A549 (cell line): ENCODE measurements at regions of chr16 and their contacts with region 1.

Region 1: DNA sequence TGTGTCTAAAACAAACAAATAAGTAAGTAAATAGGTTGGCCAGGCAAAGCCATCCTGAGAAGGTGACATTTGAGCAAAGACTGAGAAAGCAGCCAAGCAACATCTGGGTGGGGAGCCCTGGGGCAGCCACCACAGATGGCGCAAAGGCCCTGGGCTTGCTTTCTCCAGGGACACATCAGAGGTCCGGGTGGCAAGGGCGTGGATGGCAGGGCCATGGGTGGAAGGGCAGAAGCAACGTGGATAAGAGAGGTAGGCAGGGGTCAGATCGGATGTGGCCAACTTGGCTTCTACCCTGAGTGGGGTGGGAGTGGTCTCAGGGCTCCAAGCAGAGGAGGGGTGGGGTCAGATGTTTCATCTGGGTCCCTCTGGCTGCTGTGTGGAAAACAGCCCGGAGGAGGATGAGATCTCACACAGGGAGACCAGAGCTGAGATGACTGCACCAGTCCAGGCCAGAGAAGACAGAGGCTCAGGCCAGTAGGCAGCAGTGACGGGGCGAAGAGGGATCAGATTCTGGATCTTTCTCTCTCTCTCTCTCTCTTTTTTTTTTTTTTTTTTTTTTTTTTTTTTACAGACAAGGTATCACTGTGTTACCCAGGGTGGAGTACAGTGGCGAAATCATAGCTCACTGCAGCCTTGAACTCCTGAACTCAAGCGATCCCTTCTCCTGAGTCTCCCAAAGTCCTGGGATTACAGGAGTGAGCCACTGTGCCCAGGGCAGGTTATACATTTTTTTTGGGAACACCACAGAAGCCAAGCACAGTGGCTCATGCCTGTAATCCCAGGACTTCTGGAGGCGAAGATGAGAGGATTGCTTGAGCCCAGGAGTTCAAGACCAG is 6.1 kb upstream of the SPN start:
- DNase-seq: no peak
- ATAC-seq: peak; percentile 30 to 47; a peak in 3 of 6 replicates
- H3K4me3 ChIP-seq: no peak overlapping the region
- H3K27ac ChIP-seq: no peak overlapping the region
- H3K4me1 ChIP-seq: no peaks in the 10 kb centered on the region
- CTCF ChIP-seq: no peak
- EP300 ChIP-seq: no peak
- POLR2A ChIP-seq: no peak
- RAD21 ChIP-seq: no peak

Region 2: DNA sequence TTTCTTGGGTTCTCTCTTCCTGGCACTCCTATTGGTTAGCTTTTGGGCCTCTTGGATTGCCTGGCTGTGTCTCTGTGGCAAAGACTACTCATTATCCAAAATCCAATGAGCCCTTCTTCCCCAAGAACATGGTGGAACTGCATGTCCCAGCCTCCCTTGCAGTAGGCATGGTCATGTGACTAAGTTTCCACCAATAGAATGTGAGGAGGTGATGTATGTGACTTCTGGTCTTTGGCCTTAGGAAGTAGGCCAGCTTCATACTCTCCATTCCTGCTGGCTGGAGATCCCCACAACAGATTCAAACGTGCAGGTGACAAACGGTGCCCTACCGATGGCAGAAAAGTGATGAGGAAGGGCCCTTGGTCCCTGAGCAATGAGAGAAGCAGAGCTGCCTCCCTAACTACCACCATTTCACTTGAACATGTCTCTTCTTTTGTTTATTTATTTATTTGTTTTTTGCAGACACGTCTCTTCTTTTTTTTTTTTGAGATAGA is 11.2 kb before region 1 on chr16:
- CTCF ChIA-PET with region 1: interaction called, 5 read pairs
- POLR2A ChIA-PET with region 1: interaction called, 10 read pairs
- DNase-seq: peak in 1 of 2 experiments; percentile 76
- ATAC-seq: peak; percentile 34 to 64; a peak in 3 of 6 replicates
- H3K4me3 ChIP-seq: no peak overlapping the region
- H3K27ac ChIP-seq: no peak overlapping the region
- H3K4me1 ChIP-seq: 0 out of 3 replicates have a peak, but pooled peaks cover 3% of the 10 kb centered on the region
- CTCF ChIP-seq: no peak
- EP300 ChIP-seq: no peak
- POLR2A ChIP-seq: no peak
- RAD21 ChIP-seq: no peak

Region 3: DNA sequence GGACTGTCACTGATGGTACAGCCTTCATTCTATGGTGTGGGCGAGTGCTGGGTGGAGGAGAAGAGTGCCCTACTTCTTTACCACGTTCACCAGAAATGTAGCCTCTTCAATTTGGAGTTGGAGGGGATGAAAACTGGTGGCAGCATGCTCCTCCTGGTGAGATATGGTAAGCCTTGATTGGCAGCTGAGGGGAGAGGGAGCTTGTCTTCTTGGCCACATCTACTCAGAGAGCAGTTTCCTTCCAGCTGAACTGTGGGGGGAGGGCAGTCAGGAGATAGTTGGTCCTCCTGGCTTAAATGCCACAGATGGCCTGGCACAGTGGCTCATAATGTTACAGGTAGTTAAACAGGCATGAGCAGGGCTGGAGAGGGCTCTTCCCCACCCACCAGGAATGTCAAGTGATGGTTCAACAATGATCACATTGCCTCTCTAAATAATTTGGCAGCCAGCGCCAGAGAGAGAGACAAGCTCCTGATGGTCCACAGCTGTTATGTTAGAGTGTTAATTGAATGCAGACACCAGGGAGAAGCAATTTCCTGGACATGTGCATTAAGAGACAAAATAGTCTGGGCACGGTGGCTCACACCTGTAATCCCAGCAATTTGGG is 475.1 kb after region 1 on chr16:
- CTCF ChIA-PET with region 1: no interaction called
- POLR2A ChIA-PET with region 1: no interaction called
- DNase-seq: no peak
- ATAC-seq: no peak
- H3K4me3 ChIP-seq: no peak overlapping the region
- H3K27ac ChIP-seq: no peak overlapping the region
- H3K4me1 ChIP-seq: no peaks in the 10 kb centered on the region
- CTCF ChIP-seq: no peak
- EP300 ChIP-seq: no peak
- POLR2A ChIP-seq: no peak
- RAD21 ChIP-seq: no peak